ENCODE measurements at regions of chr17 and their contacts with region 1.

Region 1: GRCh38 chr17:58658804-58659713 is 32.8 kb downstream of the TEX14 start:
- DNase-seq: peak; percentile 98
- H3K4me3 ChIP-seq: peak overlapping the region; percentile 26 to 42 (median 28)
- H3K27ac ChIP-seq: peak overlapping the region; percentile 94
- H3K4me1 ChIP-seq: no peaks in the 10 kb centered on the region
- H3K27me3 ChIP-seq: no peaks in the 10 kb centered on the region
- CTCF ChIP-seq: no peak
- POLR2A ChIP-seq: peak; percentile 100

Region 2: DNA sequence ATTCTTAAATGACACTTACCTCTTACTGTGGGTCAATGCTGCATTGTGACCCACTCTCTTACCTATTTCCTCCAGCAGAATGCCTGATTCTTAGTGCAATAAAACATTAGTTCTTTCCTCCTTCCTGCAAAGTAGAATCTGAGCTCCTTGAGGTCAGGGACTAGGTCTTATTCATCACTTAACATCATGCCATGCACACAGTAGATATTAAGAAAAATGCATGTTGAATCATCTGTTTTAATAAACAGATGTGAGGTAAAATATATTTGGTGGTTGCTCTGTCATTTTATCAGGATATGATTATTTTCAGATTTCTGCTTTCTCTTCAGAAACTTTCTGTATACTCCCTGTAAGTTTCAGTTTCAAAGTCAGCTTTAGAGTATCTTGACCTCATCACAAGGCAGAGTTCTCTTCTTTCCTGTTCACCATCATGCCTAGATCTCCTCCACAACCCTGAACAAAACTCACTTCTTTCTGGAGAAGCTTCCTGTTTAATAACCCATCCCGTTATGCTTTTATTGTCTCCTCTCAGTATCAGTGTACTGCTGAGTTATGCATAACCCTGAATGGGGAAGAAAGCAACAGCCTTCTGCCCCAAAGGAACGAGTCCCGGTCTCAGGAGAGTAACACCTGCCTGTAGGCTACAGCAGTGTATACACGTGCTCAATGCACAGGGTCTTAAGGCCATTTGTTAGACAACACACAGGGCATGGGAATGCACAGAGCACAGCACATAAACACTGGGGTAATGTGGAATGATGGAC is 276.8 kb before region 1 on chr17:
- CTCF ChIA-PET with region 1: no interaction called
- POLR2A ChIA-PET with region 1: no interaction called
- dilution Hi-C with region 1: no loop called
- intact Hi-C with region 1: no loop called
- DNase-seq: no peak
- H3K4me3 ChIP-seq: no peak overlapping the region
- H3K27ac ChIP-seq: no peak overlapping the region
- H3K4me1 ChIP-seq: no peaks in the 10 kb centered on the region
- H3K27me3 ChIP-seq: peaks cover 14 to 15% of the 10 kb centered on the region in 2 experiments
- CTCF ChIP-seq: no peak
- POLR2A ChIP-seq: no peak

Region 3: DNA sequence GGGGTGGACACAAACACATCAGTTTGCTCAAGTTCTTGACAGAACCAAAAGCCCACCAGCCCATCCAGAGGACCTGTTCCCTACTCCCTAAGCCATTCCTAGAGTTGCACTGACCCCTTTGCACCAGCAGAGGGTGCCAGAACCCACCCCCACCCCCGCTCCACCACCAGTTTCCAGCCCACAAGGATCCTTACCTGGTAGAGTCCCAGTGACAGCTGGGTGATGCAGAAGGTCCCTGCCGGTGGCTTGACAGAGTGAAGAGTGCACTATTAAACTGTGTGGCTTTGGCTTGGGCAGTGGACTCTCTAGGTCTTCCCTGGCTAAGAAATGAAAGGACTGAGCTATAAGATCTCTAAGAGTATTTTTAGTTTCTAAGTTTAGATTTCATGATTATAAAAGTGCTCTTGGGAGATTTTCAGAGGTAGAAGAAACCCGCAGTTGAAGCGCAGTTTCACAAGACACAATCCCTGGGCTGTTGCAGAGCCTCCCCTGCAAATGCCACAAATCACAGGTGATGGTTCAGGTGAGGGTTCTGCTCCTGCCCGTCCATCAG is 71.3 kb before region 1 on chr17:
- CTCF ChIA-PET with region 1: interaction called, 4 read pairs
- POLR2A ChIA-PET with region 1: no interaction called
- dilution Hi-C with region 1: no loop called
- intact Hi-C with region 1: loop called (anchors 1 kb)
- DNase-seq: peak; percentile 68
- H3K4me3 ChIP-seq: no peak overlapping the region
- H3K27ac ChIP-seq: no peak overlapping the region
- H3K4me1 ChIP-seq: no peaks in the 10 kb centered on the region
- H3K27me3 ChIP-seq: peaks cover 3 to 7% of the 10 kb centered on the region in 2 experiments
- CTCF ChIP-seq: peak; percentile 92 to 95
- POLR2A ChIP-seq: no peak

Region 4: GRCh38 chr17:58643140-58643539 is 15.9 kb before region 1 on chr17:
- CTCF ChIA-PET with region 1: interaction called, 4 read pairs
- POLR2A ChIA-PET with region 1: interaction called, 14 read pairs
- dilution Hi-C with region 1: no loop called
- intact Hi-C with region 1: loop called (anchors 1 kb)
- DNase-seq: peak; percentile 35
- H3K4me3 ChIP-seq: no peak overlapping the region
- H3K27ac ChIP-seq: peak overlapping the region; percentile 22
- H3K4me1 ChIP-seq: peaks cover 20% of the 10 kb centered on the region
- H3K27me3 ChIP-seq: no peaks in the 10 kb centered on the region
- CTCF ChIP-seq: no peak
- POLR2A ChIP-seq: no peak

Region 5: DNA sequence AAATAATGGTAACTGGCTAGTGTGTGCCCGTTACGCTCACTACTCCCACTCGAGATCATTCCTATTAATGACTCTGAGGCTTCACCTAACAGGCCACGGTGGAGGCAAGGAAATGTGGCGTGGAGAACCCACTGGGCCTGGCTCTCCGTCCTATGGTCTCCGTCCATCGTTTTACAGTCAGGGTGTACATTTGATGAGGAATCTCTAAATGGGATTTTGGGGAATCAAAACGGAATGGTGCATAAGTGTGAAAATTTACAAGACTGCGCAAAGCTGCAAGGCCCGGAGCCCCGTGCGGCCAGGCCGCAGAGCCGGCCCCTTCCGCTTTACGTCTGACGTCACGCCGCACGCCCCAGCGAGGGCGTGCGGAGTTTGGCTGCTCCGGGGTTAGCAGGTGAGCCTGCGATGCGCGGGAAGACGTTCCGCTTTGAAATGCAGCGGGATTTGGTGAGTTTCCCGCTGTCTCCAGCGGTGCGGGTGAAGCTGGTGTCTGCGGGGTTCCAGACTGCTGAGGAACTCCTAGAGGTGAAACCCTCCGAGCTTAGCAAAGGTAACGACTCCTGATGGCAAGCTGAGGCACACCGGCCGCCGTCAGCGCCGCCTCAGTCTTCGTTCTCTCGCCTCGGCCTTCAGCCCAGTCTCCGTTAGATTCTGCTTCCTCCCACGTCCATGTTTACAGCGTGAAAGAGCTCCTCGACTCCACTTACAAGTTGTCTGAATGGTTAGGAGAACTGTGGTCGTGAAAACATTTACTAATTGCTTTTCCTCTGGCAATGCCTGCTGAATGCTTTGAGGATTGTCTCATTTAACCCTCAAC is 33.4 kb after region 1 on chr17 and contains the start of gene RAD51C:
- CTCF ChIA-PET with region 1: no interaction called
- POLR2A ChIA-PET with region 1: interaction called, 5 read pairs
- dilution Hi-C with region 1: no loop called
- intact Hi-C with region 1: loop called (anchors 2 kb)
- DNase-seq: peak; percentile 82
- H3K4me3 ChIP-seq: peak within 1 kb of the TSS; percentile 8 to 69 (median 65)
- H3K27ac ChIP-seq: peak within 1 kb of the TSS; percentile 50
- H3K4me1 ChIP-seq: peaks cover 14% of the 10 kb centered on the region
- H3K27me3 ChIP-seq: no peaks in the 10 kb centered on the region
- CTCF ChIP-seq: no peak
- POLR2A ChIP-seq: peak; percentile 87
- total RNA-seq, gene RAD51C: 38.9 and 50.5 TPM in 2 replicates

Region 6: DNA sequence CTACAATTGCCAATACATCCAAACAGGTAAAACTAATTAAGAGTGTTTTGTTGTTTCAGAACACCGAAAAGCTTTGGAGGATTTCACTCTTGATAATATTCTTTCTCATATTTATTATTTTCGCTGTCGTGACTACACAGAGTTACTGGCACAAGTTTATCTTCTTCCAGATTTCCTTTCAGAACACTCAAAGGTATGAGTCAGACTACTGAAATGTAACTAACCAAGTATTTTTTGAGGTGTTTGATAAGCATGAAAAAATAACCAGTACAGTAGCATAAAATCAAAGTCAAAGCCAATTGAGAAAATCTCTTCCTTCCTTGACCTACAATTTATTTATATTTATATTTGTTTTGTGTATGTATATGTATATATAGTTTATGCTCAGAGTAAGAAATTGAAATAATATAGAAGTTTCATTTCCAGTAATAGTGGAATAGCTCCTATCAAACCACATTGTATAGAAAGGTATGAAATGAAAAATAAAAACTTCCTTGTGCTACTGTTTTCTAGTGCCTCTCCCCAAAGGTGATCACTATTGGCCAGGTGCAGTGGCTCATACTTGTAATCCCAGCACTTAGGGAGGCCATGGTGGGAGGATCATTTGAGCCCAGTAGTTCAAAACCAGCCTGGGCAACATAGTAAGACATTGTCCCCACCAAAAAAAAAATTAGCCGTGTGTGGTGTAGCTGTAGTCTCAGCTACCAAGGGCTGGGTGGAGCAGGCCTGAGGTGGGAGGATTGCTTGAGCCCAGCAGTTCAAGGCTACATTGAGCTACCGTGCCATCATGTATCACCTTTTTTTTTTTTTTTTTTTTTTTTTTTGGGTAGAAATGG is 44.3 kb after region 1 on chr17:
- CTCF ChIA-PET with region 1: interaction called, 3 read pairs
- POLR2A ChIA-PET with region 1: no interaction called
- dilution Hi-C with region 1: no loop called
- intact Hi-C with region 1: loop called (anchors 2 kb)
- DNase-seq: peak; percentile 86
- H3K4me3 ChIP-seq: peak overlapping the region in 1 of 3 experiments; percentile 15
- H3K27ac ChIP-seq: peak overlapping the region; percentile 97
- H3K4me1 ChIP-seq: peaks cover 18% of the 10 kb centered on the region
- H3K27me3 ChIP-seq: no peaks in the 10 kb centered on the region
- CTCF ChIP-seq: no peak
- POLR2A ChIP-seq: peak; percentile 40

Region 7: GRCh38 chr17:59004338-59005111 is 345.5 kb after region 1 on chr17:
- CTCF ChIA-PET with region 1: interaction called, 3 read pairs
- POLR2A ChIA-PET with region 1: no interaction called
- dilution Hi-C with region 1: no loop called
- intact Hi-C with region 1: loop called (anchors 1 kb)
- DNase-seq: peak; percentile 74
- H3K4me3 ChIP-seq: no peak overlapping the region
- H3K27ac ChIP-seq: no peak overlapping the region
- H3K4me1 ChIP-seq: peaks cover 30% of the 10 kb centered on the region
- H3K27me3 ChIP-seq: no peaks in the 10 kb centered on the region
- CTCF ChIP-seq: peak; percentile 69 to 79
- POLR2A ChIP-seq: no peak

Region 8: DNA sequence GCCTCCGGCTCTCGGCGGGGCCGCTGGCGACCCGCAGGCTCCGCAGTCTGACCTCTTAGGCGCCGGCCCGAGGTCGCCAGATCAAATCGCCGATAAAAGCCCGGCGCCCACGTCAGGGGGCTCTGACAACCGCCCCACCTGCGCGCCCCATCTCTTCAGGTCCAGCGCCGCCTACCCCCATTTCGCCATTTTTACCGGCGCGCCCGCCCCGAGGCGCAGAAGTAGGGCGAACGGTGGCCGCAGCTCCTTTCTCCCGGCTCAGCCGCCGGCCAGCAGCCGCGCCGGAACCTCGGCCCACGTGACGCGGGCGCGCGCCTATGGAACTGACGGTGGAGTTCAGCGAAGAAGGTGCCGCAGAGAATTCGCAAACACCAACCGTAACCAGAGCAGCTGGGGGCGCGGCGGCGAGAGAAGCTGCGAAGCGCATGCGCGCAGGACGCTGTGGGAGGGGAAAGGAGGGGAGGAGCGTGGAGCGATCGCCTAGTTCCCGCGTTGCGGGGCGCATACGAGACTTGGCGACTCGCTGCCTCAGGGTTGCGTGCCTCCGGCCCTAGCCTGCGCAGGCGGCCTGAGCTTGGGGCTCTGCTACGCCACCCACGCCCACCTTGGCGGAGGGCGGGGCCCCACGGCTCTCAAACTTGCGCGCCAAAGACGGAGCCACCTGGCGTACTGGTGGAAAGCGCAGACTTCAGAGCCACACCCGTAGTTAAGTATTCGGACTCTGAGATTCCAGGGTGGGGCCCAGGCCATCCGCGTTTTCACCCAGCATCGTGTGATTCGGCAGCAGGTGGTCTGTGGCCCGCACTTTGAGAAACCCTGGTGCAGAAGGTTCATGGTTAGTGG is 447.6 kb after region 1 on chr17 and contains the start of gene TRIM37:
- CTCF ChIA-PET with region 1: no interaction called
- POLR2A ChIA-PET with region 1: no interaction called
- dilution Hi-C with region 1: no loop called
- intact Hi-C with region 1: loop called (anchors 1 kb)
- DNase-seq: peak; percentile 100
- H3K4me3 ChIP-seq: peak within 1 kb of the TSS; percentile 29 to 91 (median 77)
- H3K27ac ChIP-seq: peak within 1 kb of the TSS; percentile 63
- H3K4me1 ChIP-seq: peaks cover 18% of the 10 kb centered on the region
- H3K27me3 ChIP-seq: no peaks in the 10 kb centered on the region
- CTCF ChIP-seq: no peak
- POLR2A ChIP-seq: peak; percentile 72
- total RNA-seq, gene TRIM37: 37.1 and 41.9 TPM in 2 replicates